ENCODE measurements at regions of chr11 and their contacts with region 1.

Region 1: GRCh38 chr11:47373876-47374720 is 4.2 kb downstream of the SPI1 start:
- DNase-seq: peak; percentile 76 to 77 (median 76)
- H3K4me3 ChIP-seq: peak overlapping the region in 3 of 7 experiments; percentile 11 to 78 (median 38)
- H3K27ac ChIP-seq: peak overlapping the region in 1 of 2 experiments; percentile 46
- H3K4me1 ChIP-seq: peaks cover 3 to 56% (median 51%) of the 10 kb centered on the region in 4 experiments
- H3K27me3 ChIP-seq: no peaks in the 10 kb centered on the region

Region 2: GRCh38 chr11:47359586-47359985 is 14.5 kb before region 1 on chr11:
- CTCF ChIA-PET with region 1: interaction called, 65 read pairs
- POLR2A ChIA-PET with region 1: interaction called, 6 read pairs
- DNase-seq: peak; percentile 74 to 96 (median 94)
- H3K4me3 ChIP-seq: peak overlapping the region in 2 of 7 experiments; percentile 13 to 28
- H3K27ac ChIP-seq: peak overlapping the region; percentile 81 to 86
- H3K4me1 ChIP-seq: peaks cover 6 to 45% (median 36%) of the 10 kb centered on the region in 4 experiments
- H3K27me3 ChIP-seq: no peaks in the 10 kb centered on the region

Region 3: DNA sequence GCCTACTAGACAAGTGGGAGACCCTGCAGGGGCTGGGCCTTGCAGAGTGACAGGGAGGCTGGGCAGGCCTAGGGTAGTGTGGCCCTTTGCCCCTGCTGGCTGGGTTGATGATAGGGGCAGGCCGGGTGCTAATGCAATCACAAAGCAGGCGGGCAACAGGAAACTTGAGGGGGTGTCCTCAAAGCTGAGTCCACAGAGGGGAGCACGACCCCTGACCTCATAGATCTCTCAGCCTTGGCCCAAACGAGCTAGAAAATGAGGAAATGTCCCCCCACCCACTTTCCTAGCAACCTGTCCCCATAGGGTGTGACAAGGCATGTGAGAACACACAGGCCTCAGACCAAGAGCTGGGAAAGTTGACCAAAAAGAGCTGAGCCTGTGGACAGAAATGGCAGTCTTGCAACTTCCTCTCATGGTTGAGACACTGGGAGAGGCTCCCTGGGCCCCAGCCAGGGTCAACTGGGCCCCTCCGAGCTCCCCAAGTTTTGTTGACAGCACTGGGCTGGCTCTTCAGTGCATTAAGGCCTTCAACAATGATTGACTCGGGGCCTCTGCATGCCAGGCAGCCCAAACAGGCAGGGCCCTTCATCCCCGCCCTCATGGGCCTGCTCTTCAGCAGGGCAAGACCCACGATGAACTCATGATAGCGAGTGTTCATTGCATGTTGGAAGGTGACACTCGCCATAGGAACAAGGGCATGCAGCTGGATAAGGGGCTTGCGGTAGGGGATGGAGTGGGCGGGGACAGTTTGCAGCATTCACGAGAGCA is 14.0 kb after region 1 on chr11:
- CTCF ChIA-PET with region 1: interaction called, 136 read pairs
- POLR2A ChIA-PET with region 1: interaction called, 68 read pairs
- DNase-seq: peak in 1 of 3 donors; percentile 39
- H3K4me3 ChIP-seq: no peak overlapping the region
- H3K27ac ChIP-seq: no peak overlapping the region
- H3K4me1 ChIP-seq: peaks cover 6 to 59% (median 53%) of the 10 kb centered on the region in 4 experiments
- H3K27me3 ChIP-seq: no peaks in the 10 kb centered on the region

Region 4: GRCh38 chr11:47394322-47395222 is 20.5 kb after region 1 on chr11:
- CTCF ChIA-PET with region 1: interaction called, 217 read pairs
- POLR2A ChIA-PET with region 1: interaction called, 68 read pairs
- DNase-seq: peak; percentile 82 to 94 (median 90)
- H3K4me3 ChIP-seq: peak overlapping the region in 6 of 7 experiments; percentile 38 to 72 (median 60)
- H3K27ac ChIP-seq: peak overlapping the region; percentile 90 to 97
- H3K4me1 ChIP-seq: peaks cover 15 to 96% (median 93%) of the 10 kb centered on the region in 4 experiments
- H3K27me3 ChIP-seq: no peaks in the 10 kb centered on the region

Region 5: DNA sequence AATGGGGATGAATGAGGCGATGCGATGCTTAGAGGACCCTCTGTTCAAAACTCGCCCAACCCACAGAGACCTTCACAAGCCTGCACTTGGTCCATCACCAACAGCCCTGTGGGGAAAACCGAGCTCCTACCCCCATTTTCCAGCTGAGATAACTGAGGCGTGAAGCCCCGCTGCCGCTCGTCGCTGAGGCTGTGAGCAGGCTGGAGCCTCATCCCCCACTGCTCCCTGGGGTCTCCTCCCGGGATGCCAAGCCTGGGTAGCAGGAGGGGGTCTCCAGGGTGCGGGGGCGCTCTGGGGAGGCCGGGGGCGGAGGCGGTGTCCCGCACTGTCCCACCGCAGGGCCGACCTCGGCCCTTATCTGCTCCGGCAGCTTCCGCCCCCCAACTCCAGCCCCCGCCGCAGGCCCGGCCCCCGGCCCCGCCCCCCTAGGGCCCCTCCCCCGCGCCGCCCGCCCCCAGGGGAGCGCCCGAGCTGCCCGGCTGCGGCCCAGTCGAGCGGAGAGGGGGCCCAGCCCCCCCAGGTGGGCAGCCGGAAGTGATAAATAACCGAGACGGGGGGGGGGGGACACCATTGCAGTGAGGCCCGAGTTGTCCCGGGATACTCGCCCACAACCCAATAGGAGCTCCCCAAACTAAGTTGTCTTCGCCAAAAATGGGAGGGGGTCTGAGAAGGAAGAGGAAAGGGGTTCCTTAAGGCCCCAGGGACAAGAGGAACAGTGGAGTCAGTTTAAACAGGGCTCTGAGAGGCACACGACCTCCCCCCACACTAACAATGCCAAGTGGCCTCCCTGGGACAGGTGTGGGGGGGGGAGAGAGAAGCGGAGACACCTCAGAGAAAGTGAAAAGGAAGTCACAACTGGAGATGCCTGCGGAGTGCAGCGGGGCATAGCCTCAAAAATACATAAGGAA is 26.0 kb after region 1 on chr11:
- CTCF ChIA-PET with region 1: interaction called, 217 read pairs
- POLR2A ChIA-PET with region 1: interaction called, 68 read pairs
- DNase-seq: peak; percentile 60 to 92 (median 88)
- H3K4me3 ChIP-seq: peak overlapping the region in 6 of 7 experiments; percentile 36 to 73 (median 56)
- H3K27ac ChIP-seq: peak overlapping the region; percentile 50 to 82
- H3K4me1 ChIP-seq: peaks cover 15 to 74% (median 68%) of the 10 kb centered on the region in 4 experiments
- H3K27me3 ChIP-seq: no peaks in the 10 kb centered on the region

Region 6: DNA sequence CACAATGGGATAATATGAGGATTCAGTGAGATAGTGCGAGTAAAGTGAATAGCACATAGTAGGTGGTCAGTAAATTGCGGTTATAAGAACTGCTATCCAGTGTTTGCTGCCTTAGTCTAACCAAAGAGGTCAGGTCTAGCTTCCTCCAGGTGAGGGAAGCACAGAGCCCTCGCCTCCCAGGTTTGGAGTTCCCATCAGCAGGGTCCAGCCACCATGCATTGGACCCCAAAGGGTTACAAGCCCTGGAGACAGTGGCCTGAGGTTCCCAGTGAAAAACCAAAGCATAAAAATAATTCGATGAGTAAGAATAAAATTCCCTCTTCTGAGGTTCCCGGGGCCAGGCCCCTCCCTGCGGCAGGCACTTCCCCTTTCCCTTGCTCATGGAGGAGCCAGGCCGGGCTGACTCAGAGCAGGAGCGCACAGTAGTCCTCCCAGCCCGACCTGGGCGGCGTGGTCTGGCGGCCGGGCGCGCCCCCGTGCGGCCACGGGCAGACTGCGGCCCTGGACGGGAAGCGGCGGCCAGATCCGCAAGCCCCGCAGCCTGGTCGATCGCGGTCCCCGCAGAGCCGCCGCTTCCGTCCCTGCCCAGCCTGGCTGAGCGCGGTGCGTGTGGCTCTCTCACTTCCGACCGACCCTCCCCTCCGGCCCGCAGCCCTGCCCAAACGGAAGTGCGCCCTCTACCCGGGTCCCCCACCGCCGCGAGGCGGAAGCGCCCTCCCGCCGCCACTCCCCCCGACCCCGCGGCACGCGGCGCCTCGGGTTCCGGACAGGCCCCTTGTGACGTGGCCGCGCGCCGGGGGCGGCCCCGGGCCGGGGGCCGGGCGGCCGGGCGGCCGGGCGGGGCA is 33.9 kb after region 1 on chr11 and contains the start of gene SLC39A13:
- CTCF ChIA-PET with region 1: interaction called, 217 read pairs
- POLR2A ChIA-PET with region 1: interaction called, 12 read pairs
- DNase-seq: peak; percentile 96 to 99 (median 98)
- H3K4me3 ChIP-seq: peak within 1 kb of the TSS; percentile 50 to 80 (median 72)
- H3K27ac ChIP-seq: peak within 1 kb of the TSS; percentile 34 to 81
- H3K4me1 ChIP-seq: peaks cover 14 to 39% (median 32%) of the 10 kb centered on the region in 4 experiments
- H3K27me3 ChIP-seq: no peaks in the 10 kb centered on the region

Region 7: DNA sequence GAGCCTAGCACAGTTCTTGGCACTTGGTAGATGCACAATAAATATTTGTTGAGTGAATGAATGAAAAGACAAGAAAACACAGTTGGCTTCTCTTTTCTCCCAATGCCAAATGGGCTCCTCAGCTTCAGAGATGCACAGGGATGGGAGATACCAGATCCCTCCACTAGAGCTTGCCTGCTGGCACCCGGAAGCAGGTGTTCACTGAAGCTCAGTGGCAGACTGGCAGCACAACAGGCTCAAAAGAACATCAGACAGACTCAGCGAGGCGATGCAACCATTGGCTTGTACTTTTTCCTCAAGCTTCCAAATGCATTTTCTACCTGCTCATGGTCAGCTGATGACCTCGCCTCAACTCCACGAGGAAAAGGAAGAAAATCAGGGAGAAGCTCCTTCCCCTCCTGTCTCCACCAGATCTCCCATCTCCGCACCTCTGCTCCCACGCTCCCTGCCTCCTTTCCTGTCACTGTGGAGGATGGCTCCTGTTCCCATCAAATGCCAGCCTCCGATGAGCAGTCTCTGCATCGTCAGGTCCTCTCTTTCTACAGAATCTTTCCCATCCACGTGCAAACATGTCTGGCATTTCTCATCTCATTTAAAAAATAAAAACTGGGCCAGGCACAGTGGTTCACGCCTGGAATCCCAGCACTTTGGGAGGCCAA is 69.1 kb after region 1 on chr11:
- CTCF ChIA-PET with region 1: no interaction called
- POLR2A ChIA-PET with region 1: no interaction called
- DNase-seq: peak in 2 of 3 donors; percentile 13 to 17
- H3K4me3 ChIP-seq: no peak overlapping the region
- H3K27ac ChIP-seq: no peak overlapping the region
- H3K4me1 ChIP-seq: no peaks in the 10 kb centered on the region
- H3K27me3 ChIP-seq: no peaks in the 10 kb centered on the region

Region 8: GRCh38 chr11:47499614-47500013 is 125.5 kb after region 1 on chr11:
- CTCF ChIA-PET with region 1: no interaction called
- POLR2A ChIA-PET with region 1: no interaction called
- DNase-seq: no peak
- H3K4me3 ChIP-seq: peak overlapping the region in 2 of 7 experiments; percentile 30 to 42
- H3K27ac ChIP-seq: peak overlapping the region; percentile 29 to 68
- H3K4me1 ChIP-seq: peaks cover 19 to 36% (median 20%) of the 10 kb centered on the region in 4 experiments
- H3K27me3 ChIP-seq: no peaks in the 10 kb centered on the region

Region 9: DNA sequence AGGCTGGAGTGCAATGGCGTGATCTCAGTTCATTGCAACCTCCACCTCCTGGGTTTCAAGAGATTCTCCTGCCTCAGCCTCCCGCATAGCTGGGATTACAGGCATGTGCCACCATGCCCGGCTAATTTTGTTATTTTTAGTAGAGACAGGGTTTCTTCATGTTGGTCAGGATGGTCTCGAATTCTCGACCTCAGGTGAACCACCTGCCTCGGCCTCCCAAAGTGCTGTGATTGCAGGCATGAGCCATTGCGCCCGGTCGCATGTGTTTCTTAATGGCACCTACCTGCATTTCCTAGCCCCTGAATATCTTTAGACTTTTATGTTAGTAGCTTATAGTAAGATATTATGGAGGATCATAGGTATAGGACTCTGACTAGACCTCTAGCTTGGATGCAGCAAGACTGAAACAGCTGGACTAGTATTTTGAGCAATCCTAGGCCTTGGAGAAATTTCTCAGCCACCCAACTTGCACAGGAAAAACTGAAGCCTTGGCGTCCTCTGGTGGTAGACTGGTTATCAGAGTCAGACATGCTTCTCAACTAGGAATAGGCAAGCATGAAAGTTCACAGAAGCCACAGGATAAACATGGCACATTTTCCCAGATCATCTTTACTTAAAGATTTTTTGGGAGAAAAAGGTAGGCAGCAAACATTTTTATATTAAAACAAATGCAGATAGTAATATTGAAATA is 242.8 kb after region 1 on chr11:
- CTCF ChIA-PET with region 1: no interaction called
- POLR2A ChIA-PET with region 1: no interaction called
- DNase-seq: peak; percentile 74 to 87 (median 81)
- H3K4me3 ChIP-seq: peak overlapping the region in 1 of 7 experiments; percentile 4
- H3K27ac ChIP-seq: peak overlapping the region; percentile 20 to 69
- H3K4me1 ChIP-seq: peaks cover under 1 to 40% (median 27%) of the 10 kb centered on the region in 4 experiments
- H3K27me3 ChIP-seq: no peaks in the 10 kb centered on the region

Measured in common myeloid progenitor, CD34-positive (primary cell).